OCI-LY7 (cell line): ENCODE measurements at regions of chr6 and their contacts with region 1.

Region 1: DNA sequence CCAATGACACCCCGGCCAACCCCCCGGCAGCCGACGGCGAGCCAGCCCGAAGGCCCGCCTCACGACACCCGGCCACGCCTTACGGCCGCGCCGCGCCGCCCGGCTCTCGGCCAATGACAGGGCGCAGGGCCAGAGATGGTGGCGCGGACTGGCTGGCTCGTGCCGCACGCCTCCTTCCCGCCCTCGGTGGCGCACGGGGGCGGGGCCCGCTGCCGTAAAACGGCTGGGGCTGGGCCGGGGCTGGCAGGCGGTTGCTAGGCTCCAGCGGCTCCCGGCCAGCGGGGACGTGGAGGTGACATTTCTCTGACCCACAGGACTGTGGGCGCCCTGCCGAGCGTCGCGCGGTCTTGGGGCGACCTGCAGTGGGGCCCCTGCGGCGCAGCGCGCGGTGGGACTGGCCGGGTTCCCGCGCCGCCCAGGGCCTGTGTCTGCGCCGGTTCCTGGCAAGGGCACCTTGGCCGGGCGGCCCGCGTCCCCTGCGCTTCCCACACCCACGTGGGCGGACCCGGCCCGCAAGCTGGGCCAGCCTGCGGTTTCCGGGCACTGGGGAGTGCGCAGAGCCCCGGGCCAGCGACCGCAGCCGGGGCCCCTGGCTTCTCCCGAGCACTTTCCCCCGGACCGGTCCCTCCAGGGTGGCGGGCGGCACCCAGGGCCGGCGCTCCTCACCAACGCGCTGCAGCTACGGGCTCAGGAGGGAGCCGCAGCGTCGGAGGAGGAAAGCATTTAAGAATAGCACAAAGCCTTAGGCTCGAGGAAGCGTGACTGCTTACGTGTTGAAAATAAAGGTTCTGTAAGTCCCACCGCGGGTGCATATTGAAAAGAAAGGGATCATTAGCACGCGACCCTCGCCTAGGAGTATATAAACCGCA is at the start of gene MPC1:
- DNase-seq: peak; percentile 96
- H3K4me3 ChIP-seq: peak within 1 kb of the TSS; percentile 85
- H3K27ac ChIP-seq: peak within 1 kb of the TSS; percentile 62
- H3K4me1 ChIP-seq: peaks cover 12% of the 10 kb centered on the region
- CTCF ChIP-seq: no peak
- total RNA-seq, gene MPC1: 36.1 and 38.9 TPM in 2 replicates

Region 2: DNA sequence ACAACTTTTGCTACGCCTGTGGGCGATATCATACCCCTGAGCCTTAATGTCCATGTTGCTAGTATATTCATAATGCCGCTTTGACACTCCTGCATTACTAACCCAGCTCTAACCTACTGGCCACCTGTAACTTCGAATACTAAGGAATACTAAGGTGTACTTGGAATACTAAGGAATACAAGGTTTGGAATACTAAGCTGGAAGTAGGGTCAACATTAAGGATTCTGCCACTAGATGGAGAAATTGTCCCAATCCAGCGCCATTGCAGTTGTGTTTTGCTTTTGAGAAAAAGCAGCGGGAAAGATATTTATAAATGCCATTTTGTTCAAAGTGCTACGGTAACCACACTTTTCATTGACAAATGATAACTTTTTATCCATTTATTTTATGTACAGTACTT is 226.2 kb before region 1 on chr6:
- CTCF ChIA-PET with region 1: no interaction called
- POLR2A ChIA-PET with region 1: no interaction called
- intact Hi-C with region 1: loop called (anchors 5 kb)
- DNase-seq: no peak
- H3K4me3 ChIP-seq: no peak overlapping the region
- H3K27ac ChIP-seq: no peak overlapping the region
- H3K4me1 ChIP-seq: peaks cover 17% of the 10 kb centered on the region
- CTCF ChIP-seq: peak; percentile 74

Region 3: GRCh38 chr6:166179704-166180103 is 203.5 kb before region 1 on chr6:
- CTCF ChIA-PET with region 1: no interaction called
- POLR2A ChIA-PET with region 1: no interaction called
- intact Hi-C with region 1: loop called (anchors 5 kb)
- DNase-seq: peak; percentile 19
- H3K4me3 ChIP-seq: no peak overlapping the region
- H3K27ac ChIP-seq: no peak overlapping the region
- H3K4me1 ChIP-seq: peaks cover 20% of the 10 kb centered on the region
- CTCF ChIP-seq: no peak

Region 4: GRCh38 chr6:166237617-166238016 is 145.6 kb before region 1 on chr6:
- CTCF ChIA-PET with region 1: no interaction called
- POLR2A ChIA-PET with region 1: no interaction called
- intact Hi-C with region 1: no loop called
- DNase-seq: no peak
- H3K4me3 ChIP-seq: no peak overlapping the region
- H3K27ac ChIP-seq: no peak overlapping the region
- H3K4me1 ChIP-seq: peaks cover 23% of the 10 kb centered on the region
- CTCF ChIP-seq: no peak

Region 5: GRCh38 chr6:166313255-166314070 is 69.7 kb before region 1 on chr6:
- CTCF ChIA-PET with region 1: interaction called, 8 read pairs
- POLR2A ChIA-PET with region 1: interaction called, 4 read pairs
- intact Hi-C with region 1: loop called (anchors 1 kb)
- DNase-seq: peak; percentile 67
- H3K4me3 ChIP-seq: no peak overlapping the region
- H3K27ac ChIP-seq: no peak overlapping the region
- H3K4me1 ChIP-seq: peaks cover 9% of the 10 kb centered on the region
- CTCF ChIP-seq: peak; percentile 96

Region 6: DNA sequence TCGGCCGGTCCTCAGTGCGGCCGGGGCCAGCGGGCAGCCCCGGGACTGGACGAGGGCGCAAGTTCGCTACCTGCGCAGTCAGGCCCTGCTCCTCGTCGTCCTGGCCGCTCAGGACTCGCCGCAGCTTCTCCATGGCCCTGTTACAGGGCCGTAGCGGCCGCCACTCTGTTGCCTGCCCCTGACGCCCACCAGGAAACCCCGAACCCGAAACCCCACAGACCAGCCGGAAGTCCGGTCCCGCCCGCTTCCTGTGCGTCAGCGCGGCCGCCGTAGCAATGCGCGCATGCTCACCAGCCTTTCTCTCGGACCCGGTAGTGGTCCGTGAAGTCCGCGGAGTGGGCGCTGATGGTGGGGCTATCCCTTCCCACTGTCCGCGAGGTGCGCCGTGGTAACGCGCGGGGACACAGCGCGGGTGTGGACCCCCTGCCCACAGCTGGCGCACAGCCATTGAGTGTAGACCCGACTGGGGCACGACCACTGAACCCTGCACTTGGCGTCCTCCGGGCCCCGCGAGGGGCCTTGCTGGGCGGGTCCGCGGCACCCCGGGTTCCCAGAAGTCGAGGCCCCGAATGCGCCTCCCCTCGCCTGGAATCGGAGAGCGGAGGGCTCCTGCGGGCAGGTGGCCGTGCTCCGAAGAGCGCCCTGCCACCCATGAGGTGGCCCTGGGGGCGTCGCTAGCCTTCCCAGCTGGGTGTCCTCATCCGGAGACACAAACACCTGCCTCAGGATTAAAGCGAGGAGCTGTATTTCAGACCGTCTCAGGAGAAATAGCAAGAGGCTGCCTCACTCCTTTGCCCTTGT is 40.6 kb before region 1 on chr6 and contains the start of gene SFT2D1:
- CTCF ChIA-PET with region 1: interaction called, 3 read pairs
- POLR2A ChIA-PET with region 1: interaction called, 7 read pairs
- intact Hi-C with region 1: loop called (anchors 1 kb)
- DNase-seq: peak; percentile 90
- H3K4me3 ChIP-seq: peak within 1 kb of the TSS; percentile 97
- H3K27ac ChIP-seq: peak within 1 kb of the TSS; percentile 65
- H3K4me1 ChIP-seq: peaks cover 25% of the 10 kb centered on the region
- CTCF ChIP-seq: no peak
- total RNA-seq, gene SFT2D1: 40.2 and 43.4 TPM in 2 replicates

Region 7: DNA sequence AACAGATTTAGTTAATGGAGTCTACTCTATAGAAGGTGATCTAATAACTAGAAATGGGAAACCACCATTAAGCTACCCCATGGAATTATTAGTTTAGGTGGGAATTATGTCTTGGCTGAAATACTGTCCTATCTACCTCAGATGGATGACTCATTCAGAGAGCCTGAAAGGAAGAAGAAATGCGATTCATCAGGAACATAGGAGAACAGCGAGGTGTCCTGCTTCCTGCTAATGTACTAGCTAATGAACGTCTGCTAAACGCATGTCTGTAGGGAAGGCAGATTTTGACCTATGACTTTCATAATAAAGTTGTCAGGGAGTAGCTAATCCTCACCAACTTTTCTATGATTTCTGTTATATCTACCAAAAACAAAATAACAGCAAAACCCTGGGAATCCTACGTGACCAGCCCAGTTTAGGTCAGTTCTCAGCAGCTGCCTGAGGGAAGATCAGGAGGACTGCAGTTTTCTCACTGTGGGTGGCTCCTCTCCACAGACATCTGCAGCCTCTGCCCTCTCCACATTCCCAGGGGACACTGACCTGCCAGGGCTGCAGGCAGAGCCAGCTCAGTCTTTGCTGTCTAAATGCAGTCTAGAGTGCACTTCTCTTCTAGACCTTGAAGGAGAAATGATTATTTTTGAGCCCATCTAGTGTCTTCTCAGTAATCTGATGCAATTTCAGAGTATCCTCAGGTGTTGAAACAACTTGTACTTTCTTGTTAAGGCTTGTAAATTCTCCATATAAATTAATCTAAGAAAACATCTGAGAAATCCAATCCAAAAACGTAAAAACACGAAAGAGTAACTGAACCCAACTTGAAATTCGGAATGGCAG is 22.7 kb before region 1 on chr6:
- CTCF ChIA-PET with region 1: interaction called, 3 read pairs
- POLR2A ChIA-PET with region 1: interaction called, 11 read pairs
- intact Hi-C with region 1: no loop called
- DNase-seq: no peak
- H3K4me3 ChIP-seq: no peak overlapping the region
- H3K27ac ChIP-seq: no peak overlapping the region
- H3K4me1 ChIP-seq: peaks cover 9% of the 10 kb centered on the region
- CTCF ChIP-seq: no peak

Region 8: DNA sequence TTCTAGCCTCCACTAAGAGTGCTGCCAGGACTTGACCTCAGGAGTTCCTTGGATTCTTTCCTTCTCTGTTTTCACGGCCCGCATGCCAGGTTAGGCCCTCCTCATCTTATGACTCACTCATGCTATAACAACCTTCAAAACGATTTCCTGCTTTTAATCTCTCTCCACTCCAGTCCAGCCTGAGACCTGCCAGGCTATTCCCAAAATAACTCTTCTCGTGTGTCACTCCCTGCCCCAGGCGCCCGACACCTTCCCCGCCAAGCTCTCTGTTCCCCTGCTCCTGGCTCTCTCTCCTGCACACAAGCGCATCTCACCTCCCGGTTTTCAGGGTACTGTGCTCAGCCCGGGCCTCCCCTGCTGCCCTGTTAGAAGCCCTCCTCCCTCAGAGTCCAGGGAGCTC is 308.0 kb after region 1 on chr6:
- CTCF ChIA-PET with region 1: no interaction called
- POLR2A ChIA-PET with region 1: no interaction called
- intact Hi-C with region 1: no loop called
- DNase-seq: no peak
- H3K4me3 ChIP-seq: no peak overlapping the region
- H3K27ac ChIP-seq: no peak overlapping the region
- H3K4me1 ChIP-seq: no peaks in the 10 kb centered on the region
- CTCF ChIP-seq: no peak